Activated B cell treated with CpG ODN at 0.5 μM for 24 hours (primary cell): ENCODE measurements at regions of chr14 and their contacts with region 1.

Region 1: DNA sequence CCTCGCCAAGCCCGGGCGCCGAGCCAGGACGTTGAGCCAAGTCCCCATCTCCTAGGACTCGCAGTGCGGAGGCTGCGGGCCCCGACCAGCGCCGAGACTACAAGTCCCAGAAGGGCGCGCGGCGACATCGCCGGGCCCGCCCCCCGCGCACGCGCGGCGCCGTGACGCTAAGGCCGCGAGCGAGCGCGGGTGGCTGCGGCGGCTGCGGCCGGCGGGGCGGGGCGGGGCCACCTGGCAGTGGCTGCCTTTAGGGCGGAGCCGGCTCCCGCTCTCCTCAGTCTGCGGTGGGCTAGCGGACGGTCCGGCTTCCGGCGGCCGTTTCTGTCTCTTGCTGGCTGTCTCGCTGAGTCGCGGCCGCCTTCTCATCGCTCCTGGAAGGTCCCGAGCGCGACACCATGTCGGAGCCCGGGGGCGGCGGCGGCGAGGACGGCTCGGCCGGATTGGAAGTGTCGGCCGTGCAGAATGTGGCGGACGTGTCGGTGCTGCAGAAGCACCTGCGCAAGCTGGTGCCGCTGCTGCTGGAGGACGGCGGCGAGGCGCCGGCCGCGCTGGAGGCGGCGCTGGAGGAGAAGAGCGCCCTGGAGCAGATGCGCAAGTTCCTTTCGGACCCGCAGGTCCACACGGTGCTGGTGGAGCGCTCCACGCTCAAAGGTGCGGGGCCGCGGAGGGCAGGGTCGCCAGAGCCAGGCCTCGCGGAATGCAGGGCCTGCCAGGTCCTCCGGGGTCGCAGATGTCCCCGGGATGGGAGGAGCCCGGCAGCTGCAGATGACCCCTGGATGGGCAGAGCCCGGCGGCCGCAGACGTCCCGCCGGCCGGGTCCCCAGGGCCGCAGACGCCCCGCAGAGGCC is at the start of gene DYNC1H1:
- DNase-seq: peak; percentile 92
- ATAC-seq: peak; percentile 87
- H3K4me3 Mint-ChIP-seq: peak within 1 kb of the TSS; percentile 92
- H3K27ac Mint-ChIP-seq: peak within 1 kb of the TSS; percentile 93
- H3K4me1 Mint-ChIP-seq: peaks cover 43% of the 10 kb centered on the region
- H3K27me3 Mint-ChIP-seq: no peaks in the 10 kb centered on the region
- CTCF ChIP-seq: no peak
- total RNA-seq, gene DYNC1H1: 208 and 236 TPM in 2 replicates

Region 2: GRCh38 chr14:101767618-101768362 is 196.7 kb before region 1 on chr14:
- CTCF ChIA-PET with region 1: interaction called, 11 read pairs
- POLR2A ChIA-PET with region 1: interaction called, 4 read pairs
- intact Hi-C with region 1: loop called (anchors 2 kb)
- DNase-seq: no peak
- ATAC-seq: no peak
- H3K4me3 Mint-ChIP-seq: no peak overlapping the region
- H3K27ac Mint-ChIP-seq: no peak overlapping the region
- H3K4me1 Mint-ChIP-seq: peaks cover 11% of the 10 kb centered on the region
- H3K27me3 Mint-ChIP-seq: no peaks in the 10 kb centered on the region
- CTCF ChIP-seq: no peak

Region 3: DNA sequence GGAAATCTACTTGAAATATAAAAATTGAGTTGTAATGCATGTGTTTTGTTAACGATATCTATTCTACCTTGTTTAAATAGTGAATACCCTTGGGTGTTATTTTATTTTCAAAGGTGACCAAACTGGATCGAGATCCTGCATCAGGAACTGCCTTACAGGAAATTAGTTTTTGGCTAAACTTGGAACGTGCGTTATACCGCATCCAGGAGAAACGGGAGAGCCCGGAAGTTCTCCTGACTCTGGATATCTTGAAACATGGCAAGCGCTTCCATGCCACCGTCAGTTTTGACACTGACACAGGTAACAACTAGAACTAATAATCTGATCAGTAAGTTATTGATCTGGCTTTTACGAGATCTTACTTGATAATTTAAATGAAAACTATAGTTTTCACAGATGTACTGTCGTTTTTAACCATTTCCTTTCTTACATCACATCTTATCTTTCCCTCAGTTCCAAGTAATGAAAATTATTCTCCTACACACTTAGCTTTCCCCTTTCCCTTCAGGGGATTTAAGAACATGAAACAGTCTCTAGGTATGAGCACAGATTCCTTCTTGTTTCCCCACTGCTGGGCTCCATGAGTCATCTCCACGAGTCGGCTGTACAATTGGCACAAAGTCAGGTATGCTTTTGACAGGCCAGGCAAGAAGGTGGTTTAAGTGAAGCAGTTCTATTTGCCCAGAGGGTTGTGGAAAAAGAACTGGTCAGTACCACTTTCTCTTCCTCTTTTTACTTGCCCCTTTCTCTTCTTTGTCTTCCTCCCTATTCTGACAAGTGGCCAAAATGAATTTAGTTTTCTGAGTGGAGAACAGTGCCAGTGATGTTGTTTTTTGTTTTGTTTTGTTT is 16.0 kb after region 1 on chr14:
- CTCF ChIA-PET with region 1: no interaction called
- POLR2A ChIA-PET with region 1: no interaction called
- intact Hi-C with region 1: loop called (anchors 1 kb)
- DNase-seq: no peak
- ATAC-seq: peak; percentile 60
- H3K4me3 Mint-ChIP-seq: no peak overlapping the region
- H3K27ac Mint-ChIP-seq: peak overlapping the region; percentile 80
- H3K4me1 Mint-ChIP-seq: peaks cover 8% of the 10 kb centered on the region
- H3K27me3 Mint-ChIP-seq: no peaks in the 10 kb centered on the region
- CTCF ChIP-seq: no peak

Region 4: GRCh38 chr14:102096214-102097114 is 131.9 kb after region 1 on chr14:
- CTCF ChIA-PET with region 1: interaction called, 12 read pairs
- POLR2A ChIA-PET with region 1: no interaction called
- intact Hi-C with region 1: loop called (anchors 1 kb)
- DNase-seq: peak; percentile 46
- ATAC-seq: peak; percentile 56
- H3K4me3 Mint-ChIP-seq: no peak overlapping the region
- H3K27ac Mint-ChIP-seq: no peak overlapping the region
- H3K4me1 Mint-ChIP-seq: peaks cover 4% of the 10 kb centered on the region
- H3K27me3 Mint-ChIP-seq: no peaks in the 10 kb centered on the region
- CTCF ChIP-seq: no peak

Region 5: DNA sequence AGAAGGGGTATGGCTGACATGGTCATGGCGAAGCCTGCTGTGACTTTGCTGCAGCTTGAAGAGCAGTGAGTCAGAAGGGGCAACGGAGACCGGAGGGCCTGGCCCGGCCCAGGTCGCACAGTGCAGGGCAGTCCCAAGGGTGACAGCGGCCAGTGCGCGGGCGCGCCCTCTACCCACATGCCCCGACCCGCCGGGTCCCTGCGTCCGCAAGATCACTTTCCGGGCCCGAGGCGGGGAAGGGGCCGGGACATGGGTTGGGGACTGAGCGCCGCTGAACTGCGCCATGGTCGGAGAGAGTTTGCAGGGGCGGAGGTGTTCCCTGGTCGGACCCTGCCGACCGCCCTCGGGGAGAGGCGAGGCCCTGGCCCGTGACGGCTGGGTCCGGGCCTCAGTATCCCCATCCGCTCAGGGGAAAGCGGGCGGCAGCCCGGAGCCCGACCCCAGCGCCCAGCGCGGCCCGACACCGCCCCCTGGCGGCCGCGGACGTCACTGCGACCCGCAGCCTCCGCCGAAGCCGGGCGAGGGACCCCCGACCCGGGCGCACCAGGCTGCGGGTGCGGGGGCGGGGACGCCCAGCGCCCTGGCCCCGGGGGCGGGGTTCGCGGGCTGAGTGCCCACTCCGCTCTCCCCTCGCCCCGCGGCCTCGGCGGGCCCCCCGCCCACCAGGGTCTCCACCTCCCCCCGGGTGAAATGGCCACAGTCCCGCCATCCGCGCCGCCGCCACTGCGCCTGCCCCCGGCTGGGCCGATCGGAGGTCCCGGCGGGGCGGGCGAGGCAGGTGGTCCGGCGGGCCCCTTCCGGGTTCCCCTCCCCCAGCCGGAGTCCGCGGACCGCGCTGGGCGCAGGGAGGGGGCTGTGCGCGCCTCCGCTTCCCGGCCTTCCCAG is 552.3 kb after region 1 on chr14:
- CTCF ChIA-PET with region 1: no interaction called
- POLR2A ChIA-PET with region 1: no interaction called
- intact Hi-C with region 1: loop called (anchors 2 kb)
- DNase-seq: peak; percentile 79
- ATAC-seq: peak; percentile 88
- H3K4me3 Mint-ChIP-seq: peak overlapping the region; percentile 81
- H3K27ac Mint-ChIP-seq: no peak overlapping the region
- H3K4me1 Mint-ChIP-seq: peaks cover 3% of the 10 kb centered on the region
- H3K27me3 Mint-ChIP-seq: peaks cover 3% of the 10 kb centered on the region
- CTCF ChIP-seq: peak; percentile 48